Mammary epithelial cell (primary cell): ENCODE measurements at regions of chr2 and their contacts with region 1.

Region 1: GRCh38 chr2:193584522-193584938 is 1389.8 kb upstream of the TMEFF2 start:
- DNase-seq: peak; percentile 20
- H3K4me3 ChIP-seq: no peak overlapping the region
- H3K27ac ChIP-seq: no peak overlapping the region
- H3K4me1 ChIP-seq: no peaks in the 10 kb centered on the region
- H3K27me3 ChIP-seq: no peaks in the 10 kb centered on the region
- CTCF ChIP-seq: peak; percentile 49 to 69

Region 2: DNA sequence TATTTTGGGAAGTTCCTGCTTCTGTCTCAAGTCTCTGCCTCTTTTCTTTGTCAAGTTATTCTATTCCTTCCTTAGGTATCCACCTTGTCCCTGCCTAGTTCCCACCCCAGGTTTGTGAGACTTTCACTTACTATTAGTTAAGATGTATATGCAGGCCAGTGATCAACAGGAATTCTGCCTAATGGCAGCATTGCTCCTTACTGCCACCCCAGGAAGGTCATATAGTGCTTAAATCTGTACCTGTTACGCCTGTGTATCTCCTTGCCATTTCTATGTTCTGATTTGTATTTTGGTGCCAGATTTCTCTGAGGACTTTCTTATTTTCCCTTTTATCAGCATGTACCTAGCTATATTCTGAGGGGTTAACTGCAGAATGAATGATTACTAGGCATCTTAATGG is 643.8 kb before region 1 on chr2:
- CTCF ChIA-PET with region 1: no interaction called
- dilution Hi-C with region 1: no loop called
- in situ Hi-C with region 1: no loop called
- intact Hi-C with region 1: loop called (anchors 5 kb)
- DNase-seq: no peak
- H3K4me3 ChIP-seq: no peak overlapping the region
- H3K27ac ChIP-seq: no peak overlapping the region
- H3K4me1 ChIP-seq: no peaks in the 10 kb centered on the region
- H3K27me3 ChIP-seq: no peaks in the 10 kb centered on the region
- CTCF ChIP-seq: peak in 1 of 2 donors; percentile 14